Right cardiac atrium (tissue), 5 donors: ENCODE measurements at regions of chr5 and their contacts with region 1.

Region 1: DNA sequence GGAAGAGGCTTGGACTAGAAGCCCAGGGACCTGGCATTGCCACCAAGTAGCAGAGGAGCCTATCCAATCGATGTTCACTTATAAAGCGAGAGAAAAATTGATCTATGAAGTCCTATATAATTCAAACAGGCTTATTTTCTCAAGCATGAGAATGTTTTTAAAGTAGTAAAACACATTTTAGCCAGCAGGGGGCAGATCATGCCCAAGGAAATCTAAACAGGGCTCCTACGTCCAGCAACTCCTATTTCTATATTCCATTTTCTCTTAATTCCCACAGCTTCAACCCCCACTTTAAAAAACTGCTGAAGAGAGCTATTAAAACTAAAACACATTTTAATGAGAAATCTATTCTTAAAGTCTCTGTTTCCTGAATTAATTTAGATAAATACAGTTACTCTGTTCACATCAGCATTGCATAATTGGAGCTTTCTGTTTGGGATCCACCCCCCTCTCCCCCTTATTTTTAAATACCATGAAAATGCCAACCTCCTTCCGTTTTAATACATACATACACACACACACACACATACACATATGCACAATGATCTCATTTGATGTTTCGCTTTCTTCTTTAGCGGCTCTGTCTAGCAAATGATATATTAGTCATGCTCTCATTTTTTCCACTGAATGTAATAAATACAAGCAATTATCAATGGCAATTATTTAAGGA is 144.9 kb downstream of the MYO10 start:
- DNase-seq: no peak
- ATAC-seq: peak; percentile 43 to 44
- H3K4me3 ChIP-seq: no peak overlapping the region
- H3K27ac ChIP-seq: no peak overlapping the region
- H3K4me1 ChIP-seq: no peaks in the 10 kb centered on the region
- H3K27me3 ChIP-seq: no peaks in the 10 kb centered on the region

Region 2: DNA sequence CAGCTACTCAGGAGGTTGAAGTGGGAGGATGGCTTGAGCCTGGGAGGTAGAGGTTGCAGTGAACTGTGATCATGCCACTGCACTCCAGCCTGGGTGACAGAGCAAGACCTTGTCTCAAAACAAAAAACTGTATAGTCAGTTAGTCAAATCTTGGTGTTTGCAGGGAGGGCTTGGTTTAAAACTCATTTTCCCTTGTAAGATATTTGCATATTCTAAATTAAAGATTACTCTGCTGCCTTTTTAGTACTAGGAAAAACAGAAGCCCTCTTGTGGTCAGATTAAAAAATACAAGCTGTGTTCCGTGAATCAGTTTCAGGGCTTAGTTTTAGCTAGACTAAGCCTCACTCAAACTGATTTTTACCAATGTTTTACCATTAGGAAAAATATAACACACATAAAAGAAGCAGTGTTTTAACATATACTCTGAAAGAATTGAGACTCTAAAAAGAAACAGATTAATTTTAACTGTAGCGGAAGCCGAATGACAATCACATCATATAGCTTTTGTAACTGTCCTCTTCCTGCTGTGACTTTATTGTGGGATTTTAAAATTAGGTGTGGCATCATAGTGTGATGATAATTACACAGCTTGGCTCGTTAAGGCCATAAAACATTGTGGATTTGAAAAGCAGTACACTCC is 341.4 kb after region 1 on chr5:
- intact Hi-C with region 1: loop called in 2 of 4 experiments (anchors 5 to 10 kb)
- DNase-seq: no peak
- ATAC-seq: no peak
- H3K4me3 ChIP-seq: no peak overlapping the region
- H3K27ac ChIP-seq: no peak overlapping the region
- H3K4me1 ChIP-seq: no peaks in the 10 kb centered on the region
- H3K27me3 ChIP-seq: no peaks in the 10 kb centered on the region

Region 3: GRCh38 chr5:17189381-17190036 is 398.3 kb after region 1 on chr5:
- intact Hi-C with region 1: loop called in 3 of 4 experiments (anchors 2 to 5 kb)
- DNase-seq: peak; percentile 82 to 93 (median 83)
- ATAC-seq: peak; percentile 67 to 84
- H3K4me3 ChIP-seq: no peak overlapping the region
- H3K27ac ChIP-seq: no peak overlapping the region
- H3K4me1 ChIP-seq: peaks cover 3% of the 10 kb centered on the region
- H3K27me3 ChIP-seq: no peaks in the 10 kb centered on the region